ENCODE measurements at regions of chr6 and their contacts with region 1.

Region 1: GRCh38 chr6:128731249-128732165 is 151.4 kb upstream of the LAMA2 start:
- DNase-seq: no peak
- H3K4me3 ChIP-seq: no peak overlapping the region
- CTCF ChIP-seq: no peak
- POLR2A ChIP-seq: no peak

Region 2: GRCh38 chr6:127737009-127737486 is 994.5 kb before region 1 on chr6:
- intact Hi-C with region 1: loop called (anchors 5 kb)
- DNase-seq: peak in 1 of 2 donors; percentile 23
- H3K4me3 ChIP-seq: no peak overlapping the region
- CTCF ChIP-seq: no peak
- POLR2A ChIP-seq: no peak

Region 3: GRCh38 chr6:128595544-128595943 is 136.0 kb before region 1 on chr6:
- intact Hi-C with region 1: no loop called
- DNase-seq: no peak
- H3K4me3 ChIP-seq: no peak overlapping the region
- CTCF ChIP-seq: no peak
- POLR2A ChIP-seq: no peak

Measured in lower leg skin (tissue), 4 donors.